ENCODE measurements at regions of chr11 and their contacts with region 1.

Region 1: GRCh38 chr11:82610671-82611070 is 123.0 kb downstream of the FAM181B start:
- DNase-seq: no peak
- ATAC-seq: no peak
- H3K4me3 Mint-ChIP-seq: no peak overlapping the region
- H3K27ac Mint-ChIP-seq: no peak overlapping the region
- H3K4me1 Mint-ChIP-seq: no peaks in the 10 kb centered on the region
- H3K27me3 Mint-ChIP-seq: peaks cover 2% of the 10 kb centered on the region

Region 2: GRCh38 chr11:82384308-82384707 is 226.4 kb before region 1 on chr11:
- CTCF ChIA-PET with region 1: no interaction called
- POLR2A ChIA-PET with region 1: interaction called, 10 read pairs
- intact Hi-C with region 1: no loop called
- DNase-seq: no peak
- ATAC-seq: no peak
- H3K4me3 Mint-ChIP-seq: no peak overlapping the region
- H3K27ac Mint-ChIP-seq: no peak overlapping the region
- H3K4me1 Mint-ChIP-seq: no peaks in the 10 kb centered on the region
- H3K27me3 Mint-ChIP-seq: no peaks in the 10 kb centered on the region

Region 3: GRCh38 chr11:82599836-82600235 is 10.8 kb before region 1 on chr11:
- CTCF ChIA-PET with region 1: no interaction called
- POLR2A ChIA-PET with region 1: no interaction called
- intact Hi-C with region 1: no loop called
- DNase-seq: no peak
- ATAC-seq: no peak
- H3K4me3 Mint-ChIP-seq: no peak overlapping the region
- H3K27ac Mint-ChIP-seq: no peak overlapping the region
- H3K4me1 Mint-ChIP-seq: no peaks in the 10 kb centered on the region
- H3K27me3 Mint-ChIP-seq: no peaks in the 10 kb centered on the region